ENCODE measurements at regions of chr12 and their contacts with region 1.

Region 1: GRCh38 chr12:7806863-7807487 is 17.8 kb downstream of the NANOG start:
- DNase-seq: peak; percentile 82
- H3K4me3 Mint-ChIP-seq: no peak overlapping the region
- H3K27ac Mint-ChIP-seq: no peak overlapping the region
- H3K4me1 Mint-ChIP-seq: no peaks in the 10 kb centered on the region
- H3K27me3 Mint-ChIP-seq: no peaks in the 10 kb centered on the region

Region 2: GRCh38 chr12:7219599-7220243 is 587.3 kb before region 1 on chr12:
- CTCF ChIA-PET with region 1: no interaction called
- intact Hi-C with region 1: loop called (anchors 2 kb)
- DNase-seq: peak; percentile 87
- H3K4me3 Mint-ChIP-seq: no peak overlapping the region
- H3K27ac Mint-ChIP-seq: no peak overlapping the region
- H3K4me1 Mint-ChIP-seq: no peaks in the 10 kb centered on the region
- H3K27me3 Mint-ChIP-seq: no peaks in the 10 kb centered on the region

Region 3: GRCh38 chr12:7583571-7583970 is 223.4 kb before region 1 on chr12:
- CTCF ChIA-PET with region 1: no interaction called
- intact Hi-C with region 1: loop called (anchors 1 kb)
- DNase-seq: no peak
- H3K4me3 Mint-ChIP-seq: no peak overlapping the region
- H3K27ac Mint-ChIP-seq: no peak overlapping the region
- H3K4me1 Mint-ChIP-seq: peaks cover 2% of the 10 kb centered on the region
- H3K27me3 Mint-ChIP-seq: peaks cover 18% of the 10 kb centered on the region

Region 4: DNA sequence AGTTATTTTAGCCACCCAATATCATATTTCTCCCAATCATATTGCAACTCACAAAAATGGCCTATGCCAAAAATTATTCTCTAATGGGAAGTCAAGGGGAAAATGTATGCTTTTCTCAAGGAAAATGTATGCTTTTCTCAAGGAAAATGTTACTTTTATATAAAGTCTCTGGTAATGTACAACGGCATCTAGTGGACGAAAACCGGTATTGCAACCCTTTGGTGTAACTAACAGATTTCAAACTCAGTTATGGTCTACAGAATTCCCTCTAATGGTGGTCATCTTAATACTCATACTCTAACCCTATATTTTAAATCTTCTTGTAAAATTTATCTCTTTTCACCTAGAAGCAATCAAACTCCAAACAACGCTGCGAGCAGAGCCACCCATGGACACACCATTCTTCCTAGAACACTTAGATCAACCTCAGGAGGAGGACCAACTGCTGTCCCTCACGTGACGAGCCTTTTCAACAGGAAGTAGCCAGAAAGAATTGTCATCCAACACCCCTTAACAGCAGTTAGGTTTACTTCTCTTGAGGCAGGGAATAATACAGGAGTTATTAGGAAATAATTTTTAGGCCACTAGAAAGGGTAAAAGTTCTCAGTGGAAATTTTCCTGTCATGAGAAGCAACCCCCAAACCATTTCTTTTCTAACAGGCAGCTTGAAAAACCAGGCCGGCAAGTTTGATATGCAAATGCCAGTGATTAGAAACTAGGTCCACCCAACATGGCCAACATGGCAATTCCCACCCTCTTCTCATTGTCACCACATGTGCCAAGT is 161.4 kb before region 1 on chr12:
- CTCF ChIA-PET with region 1: interaction called, 42 read pairs
- intact Hi-C with region 1: loop called (anchors 1 kb)
- DNase-seq: peak; percentile 55
- H3K4me3 Mint-ChIP-seq: no peak overlapping the region
- H3K27ac Mint-ChIP-seq: no peak overlapping the region
- H3K4me1 Mint-ChIP-seq: peaks cover 6% of the 10 kb centered on the region
- H3K27me3 Mint-ChIP-seq: no peaks in the 10 kb centered on the region

Region 5: DNA sequence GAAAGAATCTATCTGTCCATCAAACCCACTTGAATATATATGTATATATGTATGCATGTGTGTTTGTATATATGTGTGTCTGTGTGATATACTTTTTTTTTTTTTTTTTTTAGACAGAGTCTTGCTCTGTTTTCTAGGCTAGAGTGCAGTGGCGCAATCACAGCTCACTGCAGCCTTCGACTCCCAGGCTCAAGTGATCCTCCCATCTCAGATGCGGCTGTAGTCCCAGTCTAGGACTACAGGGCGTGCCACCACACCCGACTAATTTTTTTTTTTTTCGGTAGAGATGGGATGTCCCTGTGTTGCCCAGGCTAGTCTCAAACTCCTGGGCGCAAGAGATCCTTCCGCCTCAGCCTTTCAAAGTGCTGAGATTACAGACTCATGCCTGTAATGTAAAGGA is 128.2 kb before region 1 on chr12:
- CTCF ChIA-PET with region 1: interaction called, 62 read pairs
- intact Hi-C with region 1: loop called (anchors 1 kb)
- DNase-seq: no peak
- H3K4me3 Mint-ChIP-seq: no peak overlapping the region
- H3K27ac Mint-ChIP-seq: no peak overlapping the region
- H3K4me1 Mint-ChIP-seq: peaks cover 5% of the 10 kb centered on the region
- H3K27me3 Mint-ChIP-seq: no peaks in the 10 kb centered on the region

Region 6: GRCh38 chr12:7716381-7716780 is 90.6 kb before region 1 on chr12:
- CTCF ChIA-PET with region 1: interaction called, 3 read pairs
- intact Hi-C with region 1: loop called (anchors 1 kb)
- DNase-seq: no peak
- H3K4me3 Mint-ChIP-seq: no peak overlapping the region
- H3K27ac Mint-ChIP-seq: no peak overlapping the region
- H3K4me1 Mint-ChIP-seq: no peaks in the 10 kb centered on the region
- H3K27me3 Mint-ChIP-seq: no peaks in the 10 kb centered on the region

Region 7: DNA sequence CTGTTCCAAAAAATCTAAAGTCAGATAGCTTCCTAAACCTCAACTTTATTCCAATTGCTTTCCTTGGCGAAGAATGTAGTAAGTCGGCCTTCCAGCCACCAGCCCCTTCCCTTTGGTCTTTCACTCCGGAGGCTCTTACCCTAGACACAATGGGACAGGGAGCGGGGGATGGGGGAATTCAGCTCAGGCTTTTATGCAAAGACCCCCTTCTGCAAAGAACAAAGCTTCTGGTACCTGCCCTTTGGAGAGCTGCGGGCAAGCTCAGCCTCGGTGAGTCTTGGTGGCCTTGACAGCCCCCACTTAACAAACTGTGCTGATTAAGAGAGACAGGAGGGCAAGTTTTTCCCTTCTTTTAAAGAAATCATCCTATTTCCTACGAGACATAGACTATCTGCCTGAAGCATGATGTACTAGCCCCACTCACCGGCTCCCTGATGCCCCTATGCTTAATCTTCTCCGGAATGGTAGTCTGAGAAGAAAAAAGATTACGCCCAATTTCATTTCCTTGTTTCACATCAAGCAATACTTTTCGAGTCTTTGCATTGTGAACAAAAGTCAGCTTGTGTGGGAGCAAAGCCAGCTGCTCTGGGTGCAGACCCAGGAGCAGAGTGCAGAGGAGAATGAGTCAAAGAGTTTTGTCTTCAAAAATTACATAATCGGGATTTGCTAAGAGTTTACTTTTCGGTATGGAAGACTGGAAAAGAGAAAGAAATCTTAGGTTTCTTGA is 19.2 kb before region 1 on chr12:
- CTCF ChIA-PET with region 1: interaction called, 13 read pairs
- intact Hi-C with region 1: no loop called
- DNase-seq: no peak
- H3K4me3 Mint-ChIP-seq: no peak overlapping the region
- H3K27ac Mint-ChIP-seq: no peak overlapping the region
- H3K4me1 Mint-ChIP-seq: no peaks in the 10 kb centered on the region
- H3K27me3 Mint-ChIP-seq: peaks cover 2% of the 10 kb centered on the region

Measured in activated naive CD4-positive, alpha-beta T cell treated with anti-CD3 and anti-CD28 coated beads for 36 hours (primary cell).